BJ (cell line): ENCODE measurements at regions of chr12 and their contacts with region 1.

Region 1: GRCh38 chr12:13023811-13024530 is 20.2 kb upstream of the FAM234B start:
- DNase-seq: no peak
- H3K4me3 ChIP-seq: no peak overlapping the region
- H3K27me3 ChIP-seq: 0 out of 2 replicates have a peak, but pooled peaks cover 2% of the 10 kb centered on the region
- CTCF ChIP-seq: peak; percentile 74

Region 2: GRCh38 chr12:12813120-12814101 is 210.6 kb before region 1 on chr12 and contains the start of gene DDX47:
- CTCF ChIA-PET with region 1: no interaction called
- POLR2A ChIA-PET with region 1: no interaction called
- DNase-seq: no peak
- H3K4me3 ChIP-seq: peak within 1 kb of the TSS; percentile 78
- H3K27me3 ChIP-seq: no peaks in the 10 kb centered on the region
- CTCF ChIP-seq: peak; percentile 99
- polyA plus RNA-seq, gene DDX47: 47.9 and 68.9 TPM in 2 replicates

Region 3: DNA sequence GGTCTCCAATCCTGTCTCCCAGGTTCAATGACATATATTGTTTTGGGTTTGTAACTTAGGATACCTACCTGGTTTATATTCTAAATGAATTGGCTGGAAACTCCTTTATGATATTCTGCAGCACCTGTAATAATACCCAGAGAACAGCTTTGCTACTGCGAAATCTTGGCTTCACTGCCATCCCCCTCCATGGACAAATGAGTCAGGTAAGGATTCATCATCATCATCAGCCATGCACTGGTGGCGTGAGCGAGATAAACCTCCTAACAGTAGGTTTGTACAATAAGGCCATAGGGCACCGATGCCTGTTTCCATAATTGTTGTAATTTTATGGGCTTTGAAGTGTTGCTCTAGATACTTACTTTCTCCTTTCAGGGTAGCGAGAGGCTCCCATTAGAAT is 200.2 kb before region 1 on chr12:
- CTCF ChIA-PET with region 1: no interaction called
- POLR2A ChIA-PET with region 1: no interaction called
- DNase-seq: no peak
- H3K4me3 ChIP-seq: no peak overlapping the region
- H3K27me3 ChIP-seq: no peaks in the 10 kb centered on the region
- CTCF ChIP-seq: no peak

Region 4: GRCh38 chr12:13038491-13039161 is 14.7 kb after region 1 on chr12:
- CTCF ChIA-PET with region 1: interaction called, 14 read pairs
- POLR2A ChIA-PET with region 1: no interaction called
- DNase-seq: peak; percentile 61
- H3K4me3 ChIP-seq: no peak overlapping the region
- H3K27me3 ChIP-seq: peaks cover 2% of the 10 kb centered on the region; the same call in 1 of the 2 replicates
- CTCF ChIP-seq: no peak

Region 5: GRCh38 chr12:13044002-13044905 is 20.3 kb after region 1 on chr12 and contains the start of gene FAM234B:
- CTCF ChIA-PET with region 1: interaction called, 14 read pairs
- POLR2A ChIA-PET with region 1: no interaction called
- DNase-seq: no peak
- H3K4me3 ChIP-seq: peak within 1 kb of the TSS; percentile 99
- H3K27me3 ChIP-seq: peaks cover 3% of the 10 kb centered on the region; the same call in 1 of the 2 replicates
- CTCF ChIP-seq: peak; percentile 19; the same call in 1 of the 2 replicates
- polyA plus RNA-seq, gene FAM234B: 2.4 and 2.8 TPM in 2 replicates

Region 6: DNA sequence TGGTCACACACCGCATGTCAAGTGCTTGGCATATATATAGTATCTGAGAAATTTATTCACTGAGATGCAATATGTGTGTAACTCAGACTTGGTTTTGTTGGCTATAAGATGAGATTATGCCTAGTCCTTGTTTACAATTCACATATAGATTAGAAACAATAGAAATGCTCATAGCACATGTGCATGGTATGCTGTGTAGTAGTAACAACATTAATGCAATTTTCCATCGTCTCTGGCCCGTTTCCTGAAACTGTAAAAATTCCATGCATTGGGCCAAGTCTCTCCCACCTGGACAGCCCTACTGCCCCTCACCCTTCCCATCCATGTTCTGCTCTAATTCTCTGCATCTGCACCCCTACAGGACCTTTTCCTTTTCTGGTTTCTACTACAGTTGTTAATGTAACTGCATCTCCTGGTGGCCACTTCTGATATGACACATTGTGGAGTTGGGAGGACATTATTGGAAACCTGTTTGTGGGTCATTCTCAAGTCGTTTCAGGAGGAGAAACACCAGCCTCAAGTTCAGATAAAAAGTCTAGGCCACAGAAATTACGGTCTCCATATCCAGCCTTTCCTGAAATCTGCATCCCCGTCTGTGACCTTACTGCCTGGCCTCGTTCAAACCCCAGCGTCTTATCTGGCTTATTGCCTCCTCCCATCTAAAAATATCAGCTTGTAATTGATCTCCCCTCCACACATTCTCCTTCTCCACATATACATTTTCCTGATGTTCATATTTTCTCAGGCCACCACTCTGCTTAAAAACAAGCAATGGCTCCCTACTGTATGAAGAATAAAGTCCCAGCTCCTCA is 210.1 kb after region 1 on chr12:
- CTCF ChIA-PET with region 1: interaction called, 11 read pairs
- POLR2A ChIA-PET with region 1: no interaction called
- DNase-seq: no peak
- H3K4me3 ChIP-seq: no peak overlapping the region
- H3K27me3 ChIP-seq: no peaks in the 10 kb centered on the region
- CTCF ChIP-seq: peak; percentile 91